ENCODE measurements at regions of chr13 and their contacts with region 1.

Region 1: GRCh38 chr13:97235549-97236231 is 13.6 kb downstream of the MBNL2 start:
- DNase-seq: no peak
- H3K4me3 ChIP-seq: no peak overlapping the region
- H3K27ac ChIP-seq: no peak overlapping the region
- H3K4me1 ChIP-seq: peaks cover 8% of the 10 kb centered on the region
- H3K27me3 ChIP-seq: no peaks in the 10 kb centered on the region
- CTCF ChIP-seq: no peak

Region 2: DNA sequence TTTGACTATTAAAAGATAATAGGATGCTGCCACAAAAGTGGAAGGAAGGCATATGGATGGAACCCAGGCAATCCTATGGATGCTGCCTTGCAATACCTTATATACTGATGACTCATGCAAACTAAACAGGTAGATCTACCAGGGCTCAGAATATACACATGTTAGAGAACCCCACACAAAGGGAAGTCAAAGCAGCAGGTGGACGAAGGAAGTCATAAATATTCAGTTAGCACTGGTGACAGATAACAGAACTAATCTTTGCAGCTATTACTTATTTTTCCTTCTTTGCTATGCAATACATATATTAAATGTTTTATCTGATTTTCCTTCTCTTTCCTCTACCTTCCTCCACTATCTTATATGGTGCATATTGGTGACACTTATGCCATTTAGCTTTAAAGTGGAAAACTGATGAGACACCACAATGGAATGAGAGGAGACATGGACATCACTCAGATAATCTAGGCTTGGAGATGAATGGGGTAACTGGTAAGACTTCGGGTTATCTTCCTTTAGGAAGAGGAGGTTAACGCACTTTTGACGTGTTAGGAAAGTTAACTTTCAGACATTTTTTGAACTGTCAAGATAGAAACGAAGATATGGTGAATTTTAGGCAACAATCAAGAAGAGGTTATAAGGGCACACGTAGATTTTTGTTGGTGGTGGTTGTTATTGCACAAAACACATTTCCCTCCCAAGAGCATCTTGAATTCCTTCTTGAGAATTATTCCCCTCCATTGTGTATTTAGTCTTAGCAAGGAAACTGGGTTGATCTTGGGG is 53.4 kb before region 1 on chr13:
- CTCF ChIA-PET with region 1: no interaction called
- dilution Hi-C with region 1: loop called (anchors 5 kb)
- in situ Hi-C with region 1: no loop called
- intact Hi-C with region 1: no loop called
- DNase-seq: no peak
- H3K4me3 ChIP-seq: no peak overlapping the region
- H3K27ac ChIP-seq: no peak overlapping the region
- H3K4me1 ChIP-seq: peaks cover 3% of the 10 kb centered on the region
- H3K27me3 ChIP-seq: no peaks in the 10 kb centered on the region
- CTCF ChIP-seq: no peak

Region 3: GRCh38 chr13:97212601-97213040 is 23.1 kb before region 1 on chr13:
- CTCF ChIA-PET with region 1: no interaction called
- dilution Hi-C with region 1: no loop called
- in situ Hi-C with region 1: no loop called
- intact Hi-C with region 1: no loop called
- DNase-seq: peak; percentile 67
- H3K4me3 ChIP-seq: no peak overlapping the region
- H3K27ac ChIP-seq: no peak overlapping the region
- H3K4me1 ChIP-seq: peaks cover 24% of the 10 kb centered on the region
- H3K27me3 ChIP-seq: no peaks in the 10 kb centered on the region
- CTCF ChIP-seq: peak; percentile 70 to 85

Region 4: DNA sequence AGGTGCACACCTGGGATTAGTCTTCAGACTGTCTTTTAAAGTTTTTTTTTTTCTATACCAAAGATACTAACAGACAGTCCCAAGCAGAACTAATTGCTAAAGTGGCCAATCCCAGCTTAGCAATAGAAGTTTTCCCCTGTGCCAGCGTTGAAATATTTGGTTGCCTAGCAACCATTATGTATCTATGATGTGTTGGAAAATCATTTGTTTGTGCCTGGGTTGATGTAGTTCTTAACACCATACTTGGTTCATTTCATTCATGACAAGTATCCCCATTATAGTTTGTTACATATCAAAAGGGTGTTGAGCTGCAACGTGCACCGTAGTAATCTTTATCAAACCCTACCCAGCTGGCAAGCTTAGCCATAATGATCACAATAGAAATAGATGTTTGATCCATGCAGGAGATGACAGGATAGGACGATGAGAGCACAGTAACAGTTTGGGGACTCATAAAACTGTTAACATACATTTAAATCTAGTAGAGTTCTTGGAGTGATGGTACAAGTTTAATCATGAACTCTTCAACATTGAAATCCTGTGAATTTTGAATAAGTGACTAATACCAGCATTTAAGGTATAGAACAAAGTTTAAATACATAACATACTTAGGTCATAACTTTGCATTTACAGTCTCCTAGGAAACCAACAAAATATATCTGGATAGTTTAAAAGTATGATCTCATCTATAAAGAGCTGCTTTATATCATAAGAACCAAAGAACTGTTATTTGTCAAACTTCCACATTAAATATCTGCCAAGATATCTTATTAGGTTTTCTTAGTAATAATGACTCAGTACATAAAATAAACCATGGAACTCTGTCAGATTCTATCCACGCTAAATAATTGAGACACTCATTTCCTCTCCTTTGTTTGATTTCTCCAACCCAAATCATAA is 59.8 kb after region 1 on chr13:
- CTCF ChIA-PET with region 1: no interaction called
- dilution Hi-C with region 1: loop called (anchors 5 kb)
- in situ Hi-C with region 1: no loop called
- intact Hi-C with region 1: no loop called
- DNase-seq: peak; percentile 88
- H3K4me3 ChIP-seq: peak overlapping the region in 1 of 3 experiments; percentile 14
- H3K27ac ChIP-seq: peak overlapping the region; percentile 99
- H3K4me1 ChIP-seq: peaks cover 45% of the 10 kb centered on the region
- H3K27me3 ChIP-seq: no peaks in the 10 kb centered on the region
- CTCF ChIP-seq: no peak

Region 5: DNA sequence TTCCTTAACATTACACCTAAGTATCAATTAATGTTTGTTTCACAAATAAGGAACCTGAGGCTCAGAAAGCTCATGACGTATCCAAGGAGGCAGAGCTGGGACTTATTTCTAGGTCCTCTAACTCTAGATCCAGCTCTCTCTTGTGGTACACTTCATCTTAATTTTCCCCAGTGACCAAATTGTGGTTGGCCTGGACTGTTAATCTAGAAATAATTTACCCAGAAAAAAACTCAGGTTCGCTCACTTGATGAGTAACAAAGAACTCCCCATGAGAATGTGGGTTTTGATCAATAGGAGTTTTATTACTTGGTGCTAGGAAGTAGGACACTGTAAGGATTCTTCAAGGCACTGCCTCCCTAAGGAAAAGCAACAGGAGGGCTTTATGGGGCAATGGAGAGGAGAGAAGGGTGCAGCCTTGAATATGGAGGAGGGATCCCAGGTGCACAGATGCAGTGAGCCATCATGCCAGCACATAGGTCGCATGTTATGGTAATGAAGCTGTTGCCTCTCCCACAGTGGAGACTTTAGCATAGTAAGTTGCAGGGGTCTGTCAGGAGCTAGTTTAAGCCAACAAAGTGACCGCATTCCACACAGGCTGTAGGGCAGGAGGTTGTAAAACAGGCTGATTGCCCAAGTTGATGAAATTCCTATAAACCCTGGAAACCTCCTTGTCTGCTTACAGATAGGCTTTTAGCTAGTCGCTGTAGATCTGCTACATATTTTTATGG is 213.0 kb after region 1 on chr13:
- CTCF ChIA-PET with region 1: no interaction called
- dilution Hi-C with region 1: no loop called
- in situ Hi-C with region 1: no loop called
- intact Hi-C with region 1: no loop called
- DNase-seq: no peak
- H3K4me3 ChIP-seq: no peak overlapping the region
- H3K27ac ChIP-seq: no peak overlapping the region
- H3K4me1 ChIP-seq: no peaks in the 10 kb centered on the region
- H3K27me3 ChIP-seq: no peaks in the 10 kb centered on the region
- CTCF ChIP-seq: no peak

Region 6: DNA sequence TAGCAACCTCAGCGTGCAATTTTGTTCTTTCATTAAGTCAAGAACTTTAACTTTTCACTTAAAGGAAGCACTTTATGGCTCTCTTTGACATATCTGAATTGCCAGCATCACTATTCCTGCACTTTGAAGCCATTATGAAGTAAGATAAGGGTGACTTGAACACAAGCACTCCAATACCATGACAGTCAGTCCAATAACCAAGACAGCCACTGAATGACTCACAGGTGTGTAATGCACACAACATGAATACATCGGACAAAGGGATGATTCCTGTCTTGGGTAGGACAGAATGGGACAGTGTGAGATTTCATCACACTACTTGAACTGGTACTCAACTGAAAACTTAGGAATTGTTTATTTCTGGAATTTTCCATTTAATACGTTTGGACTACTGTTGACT is 484.0 kb after region 1 on chr13:
- CTCF ChIA-PET with region 1: no interaction called
- dilution Hi-C with region 1: no loop called
- in situ Hi-C with region 1: no loop called
- intact Hi-C with region 1: no loop called
- DNase-seq: peak; percentile 44
- H3K4me3 ChIP-seq: no peak overlapping the region
- H3K27ac ChIP-seq: no peak overlapping the region
- H3K4me1 ChIP-seq: no peaks in the 10 kb centered on the region
- H3K27me3 ChIP-seq: no peaks in the 10 kb centered on the region
- CTCF ChIP-seq: no peak

Measured in mammary epithelial cell (primary cell).